Mammary epithelial cell (primary cell): ENCODE measurements at regions of chr3 and their contacts with region 1.

Region 1: DNA sequence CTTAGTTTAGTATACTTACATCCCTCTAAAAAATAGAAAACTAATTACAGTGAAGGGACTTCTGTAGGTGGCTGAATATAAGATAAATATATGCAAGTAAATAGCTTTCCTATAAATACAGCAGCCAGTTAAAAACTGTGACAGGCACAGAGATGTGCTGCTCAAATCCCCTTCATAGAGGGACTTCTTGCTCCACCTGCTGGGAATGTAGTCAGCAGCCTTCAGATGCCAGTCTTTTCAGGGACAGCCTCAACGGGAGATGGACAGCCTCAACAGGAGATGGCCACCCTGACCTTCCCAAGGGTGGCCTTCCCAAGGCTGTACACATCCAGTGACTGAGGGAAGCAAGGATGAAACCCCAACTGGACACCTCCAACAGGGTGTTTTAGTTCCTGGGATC is 15.7 kb upstream of the PRR23E start:
- DNase-seq: no peak
- H3K4me3 ChIP-seq: no peak overlapping the region
- H3K27ac ChIP-seq: no peak overlapping the region
- H3K4me1 ChIP-seq: no peaks in the 10 kb centered on the region
- H3K27me3 ChIP-seq: no peaks in the 10 kb centered on the region
- CTCF ChIP-seq: peak in 1 of 2 donors; percentile 35

Region 2: GRCh38 chr3:126911162-126912026 is 265.8 kb before region 1 on chr3:
- CTCF ChIA-PET with region 1: no interaction called
- dilution Hi-C with region 1: no loop called
- in situ Hi-C with region 1: no loop called
- intact Hi-C with region 1: no loop called
- DNase-seq: peak; percentile 99
- H3K4me3 ChIP-seq: no peak overlapping the region
- H3K27ac ChIP-seq: peak overlapping the region; percentile 78
- H3K4me1 ChIP-seq: peaks cover 48% of the 10 kb centered on the region
- H3K27me3 ChIP-seq: no peaks in the 10 kb centered on the region
- CTCF ChIP-seq: no peak

Region 3: DNA sequence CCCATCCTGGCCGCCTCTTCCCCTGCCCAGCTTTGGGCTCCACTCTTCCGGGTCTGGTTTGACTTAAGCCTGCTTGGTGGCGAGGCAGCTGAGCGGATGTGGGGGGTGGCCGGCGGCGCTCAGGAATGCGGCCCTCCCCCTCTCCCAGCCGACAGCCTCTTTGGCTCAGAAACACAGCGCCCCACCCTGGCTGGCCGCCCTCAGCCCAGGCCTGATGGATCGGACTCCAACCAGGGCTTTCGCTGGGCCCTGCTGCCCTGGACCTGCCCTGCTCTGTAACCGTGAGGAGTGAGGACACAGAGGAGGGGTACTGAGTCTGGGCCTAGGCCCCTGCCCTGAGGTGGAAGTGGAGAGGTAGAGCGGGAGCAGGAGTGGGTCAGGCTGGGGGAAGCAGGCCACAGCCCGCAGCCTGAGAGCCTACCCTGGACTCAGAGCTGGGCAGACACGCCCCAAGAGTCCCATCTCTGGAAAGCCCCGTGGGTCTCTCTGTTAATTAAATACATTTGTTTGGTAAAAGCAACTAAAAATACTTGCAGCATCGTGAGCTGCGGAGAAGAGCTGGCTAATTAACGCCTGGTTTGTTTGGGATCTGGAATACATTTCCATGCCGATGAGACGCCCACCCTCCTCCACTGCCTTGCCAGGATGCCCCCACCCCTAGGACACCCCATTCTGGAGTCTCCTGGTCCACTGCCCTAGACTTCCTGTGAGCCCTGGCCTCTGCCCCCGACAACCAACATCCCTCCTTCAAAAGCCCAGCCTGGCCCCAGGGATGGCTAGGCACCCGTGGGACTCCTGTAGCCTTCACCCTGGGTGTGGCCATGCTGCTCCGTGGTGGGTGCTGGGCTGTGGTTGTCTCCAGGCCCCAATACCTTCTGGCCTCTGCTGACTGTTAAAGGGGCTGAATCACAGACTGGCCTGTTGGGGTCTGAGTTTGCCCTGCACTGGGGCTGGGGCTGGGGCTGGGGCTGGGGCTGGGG is 174.7 kb before region 1 on chr3:
- CTCF ChIA-PET with region 1: no interaction called
- dilution Hi-C with region 1: no loop called
- in situ Hi-C with region 1: no loop called
- intact Hi-C with region 1: loop called (anchors 1 kb)
- DNase-seq: peak; percentile 82
- H3K4me3 ChIP-seq: peak overlapping the region in 2 of 3 experiments; percentile 18 to 20
- H3K27ac ChIP-seq: peak overlapping the region; percentile 42
- H3K4me1 ChIP-seq: peaks cover 63% of the 10 kb centered on the region
- H3K27me3 ChIP-seq: no peaks in the 10 kb centered on the region
- CTCF ChIP-seq: peak; percentile 45 to 64